B cell (primary cell): ENCODE measurements at regions of chr21 and their contacts with region 1.

Region 1: DNA sequence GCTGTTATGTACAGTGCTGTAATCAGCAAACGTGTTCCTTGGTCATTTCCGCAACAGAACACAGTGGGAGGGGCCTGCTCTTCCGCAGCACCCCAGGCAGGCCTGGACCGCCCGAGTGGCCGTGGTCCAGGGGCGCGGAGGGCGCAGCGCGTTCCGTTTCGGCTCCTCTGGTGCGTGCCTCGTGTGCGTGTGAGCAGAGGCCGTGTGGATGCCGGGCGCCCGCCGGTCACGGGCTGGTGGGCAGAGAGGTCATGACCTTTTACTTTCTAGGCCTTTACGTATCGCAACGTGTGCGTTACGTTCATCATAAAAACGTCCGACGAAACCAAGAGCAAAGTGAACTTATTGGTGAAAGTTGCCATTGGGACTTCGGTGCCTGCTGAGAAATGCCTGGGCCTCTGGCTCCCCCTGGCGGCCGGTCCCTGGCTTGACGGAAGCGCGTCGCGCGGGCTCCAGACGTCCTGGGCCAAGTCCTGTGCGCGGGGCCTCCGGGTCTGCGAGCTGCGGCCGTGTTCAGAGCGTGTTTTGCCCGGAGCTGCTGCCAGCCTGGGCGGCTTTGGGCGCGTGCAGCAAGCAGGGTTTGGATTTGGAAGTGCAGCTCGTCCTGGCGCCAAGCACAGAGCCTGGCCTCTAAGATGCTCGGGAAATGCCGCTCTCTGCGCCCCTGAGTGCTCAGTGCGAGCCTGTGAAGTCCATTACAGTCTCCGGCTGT is 34.4 kb downstream of the COL18A1 start:
- DNase-seq: peak; percentile 89
- ATAC-seq: peak; percentile 88
- H3K4me3 ChIP-seq: peak overlapping the region in 3 of 5 experiments; percentile 34 to 50 (median 39)
- H3K4me3 Mint-ChIP-seq: peak overlapping the region; percentile 66
- H3K27ac ChIP-seq: no peak overlapping the region
- H3K27ac Mint-ChIP-seq: peak overlapping the region; percentile 26
- H3K4me1 ChIP-seq: peaks cover 9 to 11% of the 10 kb centered on the region in 2 donors
- H3K4me1 Mint-ChIP-seq: peaks cover 6% of the 10 kb centered on the region
- H3K27me3 ChIP-seq: peaks cover 0 to 27% (median 2%) of the 10 kb centered on the region in 4 experiments
- H3K27me3 Mint-ChIP-seq: peaks cover 13% of the 10 kb centered on the region
- CTCF ChIP-seq: peak; percentile 96

Region 2: GRCh38 chr21:45152265-45152746 is 287.0 kb before region 1 on chr21:
- CTCF ChIA-PET with region 1: interaction called, 4 read pairs
- POLR2A ChIA-PET with region 1: no interaction called
- intact Hi-C with region 1: loop called (anchors 1 kb)
- DNase-seq: peak; percentile 82
- ATAC-seq: peak; percentile 97
- H3K4me3 ChIP-seq: no peak overlapping the region
- H3K4me3 Mint-ChIP-seq: peak overlapping the region; percentile 73
- H3K27ac ChIP-seq: peak overlapping the region; percentile 10 to 69
- H3K27ac Mint-ChIP-seq: peak overlapping the region; percentile 18
- H3K4me1 ChIP-seq: peaks cover 36% of the 10 kb centered on the region in 2 donors
- H3K4me1 Mint-ChIP-seq: peaks cover 46% of the 10 kb centered on the region
- H3K27me3 ChIP-seq: no peaks in the 10 kb centered on the region
- H3K27me3 Mint-ChIP-seq: no peaks in the 10 kb centered on the region
- CTCF ChIP-seq: peak; percentile 64

Region 3: GRCh38 chr21:45287438-45288391 is 151.6 kb before region 1 on chr21 and contains the start of gene POFUT2:
- CTCF ChIA-PET with region 1: interaction called, 14 read pairs
- POLR2A ChIA-PET with region 1: no interaction called
- intact Hi-C with region 1: no loop called
- DNase-seq: peak; percentile 98
- ATAC-seq: peak; percentile 88
- H3K4me3 ChIP-seq: peak within 1 kb of the TSS in 4 of 5 experiments; percentile 62 to 83 (median 74)
- H3K4me3 Mint-ChIP-seq: peak within 1 kb of the TSS; percentile 90
- H3K27ac ChIP-seq: peak within 1 kb of the TSS; percentile 47 to 82
- H3K27ac Mint-ChIP-seq: peak within 1 kb of the TSS; percentile 96
- H3K4me1 ChIP-seq: peaks cover 10 to 19% of the 10 kb centered on the region in 2 donors
- H3K4me1 Mint-ChIP-seq: peaks cover 15% of the 10 kb centered on the region
- H3K27me3 ChIP-seq: no peaks in the 10 kb centered on the region
- H3K27me3 Mint-ChIP-seq: no peaks in the 10 kb centered on the region
- CTCF ChIP-seq: no peak
- total RNA-seq, gene POFUT2: 38.3 and 44.5 TPM in 2 replicates

Region 4: DNA sequence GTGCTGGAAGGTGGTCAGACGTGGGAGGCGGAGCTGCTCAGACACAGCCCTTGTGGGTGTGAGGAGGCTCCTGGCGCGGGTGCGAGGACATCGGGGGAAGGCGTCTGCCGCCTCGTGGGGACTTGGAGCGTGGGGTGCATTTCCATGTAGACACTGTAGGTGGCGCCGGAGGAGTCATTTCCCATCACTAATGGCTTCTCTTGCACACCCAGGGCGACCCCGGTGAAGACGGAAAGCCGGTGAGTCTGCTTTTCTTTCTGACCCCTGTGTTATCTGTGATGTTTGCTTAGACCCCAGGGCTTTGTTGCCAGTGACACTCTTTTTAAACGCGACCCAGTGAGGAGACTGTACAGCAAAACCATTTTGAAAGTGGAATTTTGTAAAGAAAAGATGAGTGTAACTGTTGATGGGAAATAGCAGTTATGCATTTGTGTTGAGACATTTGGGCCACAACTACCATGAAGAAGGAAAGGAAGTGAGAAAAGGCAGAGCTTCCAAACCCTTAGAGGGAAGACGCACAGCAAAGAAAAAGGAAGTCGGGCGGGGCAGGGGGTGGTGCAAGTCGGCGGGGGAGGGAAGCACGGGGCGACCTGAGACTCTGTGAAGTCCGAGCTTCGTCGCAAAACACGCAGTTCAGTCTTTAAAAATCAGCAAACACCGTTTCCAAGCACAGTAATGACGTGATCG is 38.9 kb after region 1 on chr21:
- CTCF ChIA-PET with region 1: no interaction called
- POLR2A ChIA-PET with region 1: no interaction called
- intact Hi-C with region 1: loop called (anchors 1 kb)
- DNase-seq: peak; percentile 85
- ATAC-seq: peak; percentile 83
- H3K4me3 ChIP-seq: peak overlapping the region; percentile 11 to 53 (median 45)
- H3K4me3 Mint-ChIP-seq: peak overlapping the region; percentile 78
- H3K27ac ChIP-seq: peak overlapping the region; percentile 54 to 76
- H3K27ac Mint-ChIP-seq: peak overlapping the region; percentile 78
- H3K4me1 ChIP-seq: peaks cover 28 to 43% of the 10 kb centered on the region in 2 donors
- H3K4me1 Mint-ChIP-seq: peaks cover 29% of the 10 kb centered on the region
- H3K27me3 ChIP-seq: no peaks in the 10 kb centered on the region
- H3K27me3 Mint-ChIP-seq: no peaks in the 10 kb centered on the region
- CTCF ChIP-seq: peak; percentile 91